ENCODE measurements at regions of chr6 and their contacts with region 1.

Region 1: DNA sequence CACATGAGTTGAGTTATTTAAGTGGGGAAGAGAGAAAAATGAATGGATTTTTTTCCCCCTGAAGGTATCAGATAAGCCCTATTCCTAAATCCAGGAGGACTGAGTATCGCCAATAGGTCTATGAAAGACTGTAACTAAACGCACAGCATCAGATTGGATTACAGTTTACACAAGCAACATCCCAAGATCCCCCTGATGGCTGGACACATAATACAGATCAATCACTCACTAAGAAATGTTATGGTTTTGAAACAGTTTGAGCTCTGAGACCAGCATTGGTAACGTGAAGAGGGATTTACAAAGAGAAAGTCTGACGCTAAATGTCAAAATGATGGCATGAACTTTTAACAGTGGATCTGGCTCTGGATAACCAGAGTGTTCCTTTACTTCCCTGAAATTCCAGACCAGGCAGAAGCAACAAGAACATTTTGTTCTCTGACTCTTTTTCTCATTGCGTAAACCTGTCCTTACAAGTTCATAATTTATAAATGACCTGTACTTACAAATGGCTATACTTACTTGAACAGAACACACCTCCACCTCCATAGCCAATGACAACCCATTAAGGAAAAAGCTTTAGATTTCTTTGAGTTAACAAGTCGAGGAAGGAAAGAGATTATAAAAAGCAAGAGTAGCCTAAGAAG is 131.8 kb upstream of the BEND3 start:
- DNase-seq: no peak
- ATAC-seq: no peak; the same call in 1 of the 2 replicates
- H3K4me3 ChIP-seq: no peak overlapping the region
- H3K27ac ChIP-seq: no peak overlapping the region
- H3K4me1 ChIP-seq: no peaks in the 10 kb centered on the region
- H3K27me3 ChIP-seq: no peaks in the 10 kb centered on the region
- CTCF ChIP-seq: no peak
- POLR2A ChIP-seq: no peak
- RAD21 ChIP-seq: no peak

Region 2: GRCh38 chr6:107459283-107460082 is 212.4 kb after region 1 on chr6 and contains the start of gene PDSS2:
- CTCF ChIA-PET with region 1: no interaction called
- POLR2A ChIA-PET with region 1: no interaction called
- dilution Hi-C with region 1: no loop called
- in situ Hi-C with region 1: no loop called
- intact Hi-C with region 1: loop called (anchors 5 kb)
- DNase-seq: peak; percentile 95
- ATAC-seq: peak; percentile 99
- H3K4me3 ChIP-seq: peak within 1 kb of the TSS; percentile 85
- H3K27ac ChIP-seq: peak within 1 kb of the TSS; percentile 76
- H3K4me1 ChIP-seq: 0 out of 2 replicates have a peak, but pooled peaks cover 2% of the 10 kb centered on the region
- H3K27me3 ChIP-seq: no peaks in the 10 kb centered on the region
- CTCF ChIP-seq: peak; percentile 63
- POLR2A ChIP-seq: peak; percentile 58; the same call in 1 of the 2 replicates
- RAD21 ChIP-seq: peak; percentile 50
- total RNA-seq, gene PDSS2: 8.6 and 8.9 TPM in 2 replicates

Region 3: DNA sequence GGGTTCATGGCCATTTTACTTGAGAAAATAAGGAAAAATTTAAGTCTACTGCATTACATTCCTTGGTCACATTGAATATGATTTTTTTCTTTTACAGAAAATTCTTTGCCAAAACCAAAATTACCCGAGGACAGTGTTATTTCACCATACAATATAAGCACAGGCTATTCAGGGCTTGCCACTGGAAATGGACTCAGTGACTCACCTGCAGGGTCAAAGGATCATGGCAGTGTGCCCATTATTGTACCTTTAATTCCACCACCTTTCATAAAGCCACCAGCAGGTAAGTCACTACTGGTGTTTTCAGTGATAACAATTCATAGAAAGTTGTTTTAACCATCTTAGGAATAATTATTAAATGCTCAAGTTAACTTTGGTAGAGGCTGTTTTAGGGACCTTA is 259.1 kb after region 1 on chr6:
- CTCF ChIA-PET with region 1: no interaction called
- POLR2A ChIA-PET with region 1: no interaction called
- dilution Hi-C with region 1: no loop called
- in situ Hi-C with region 1: no loop called
- intact Hi-C with region 1: no loop called
- DNase-seq: no peak
- ATAC-seq: no peak
- H3K4me3 ChIP-seq: no peak overlapping the region
- H3K27ac ChIP-seq: no peak overlapping the region
- H3K4me1 ChIP-seq: no peaks in the 10 kb centered on the region
- H3K27me3 ChIP-seq: no peaks in the 10 kb centered on the region
- CTCF ChIP-seq: no peak
- POLR2A ChIP-seq: no peak
- RAD21 ChIP-seq: no peak